PC-3 (cell line): ENCODE measurements at regions of chr12 and their contacts with region 1.

Region 1: DNA sequence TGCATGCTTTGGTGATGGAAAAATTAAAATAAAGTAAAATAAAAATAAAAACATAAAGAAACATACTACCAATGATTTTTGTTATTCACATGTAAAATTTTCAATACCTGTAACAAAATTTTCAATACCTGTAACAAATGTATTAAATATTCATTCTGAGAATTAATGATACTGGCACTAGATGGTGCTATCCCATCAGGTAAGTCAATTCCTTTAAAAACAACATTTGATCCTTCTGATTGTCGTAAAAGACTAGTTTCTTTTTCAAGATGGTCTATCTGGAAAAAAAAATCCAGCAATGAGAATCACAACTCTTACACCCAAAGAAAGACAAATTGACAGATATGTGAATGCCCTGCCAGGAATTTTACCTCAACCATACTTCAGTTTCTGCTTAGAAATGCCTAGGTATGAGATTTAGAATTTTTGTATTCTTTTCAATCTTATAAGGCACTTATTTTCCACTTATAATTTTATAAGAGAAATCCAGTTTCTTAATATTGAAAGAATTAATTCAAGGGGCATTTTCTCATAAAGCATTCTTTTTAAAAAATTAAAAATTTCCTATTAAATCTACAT is 30.7 kb downstream of the CEP290 start:
- DNase-seq: peak; percentile 76
- ATAC-seq: no peak
- H3K4me3 ChIP-seq: peak overlapping the region; percentile 61; the same call in 1 of the 2 replicates
- H3K27ac ChIP-seq: no peak overlapping the region
- H3K4me1 ChIP-seq: peaks cover 5% of the 10 kb centered on the region; the same call in 1 of the 2 replicates
- H3K27me3 ChIP-seq: no peaks in the 10 kb centered on the region
- CTCF ChIP-seq: peak; percentile 75

Region 2: DNA sequence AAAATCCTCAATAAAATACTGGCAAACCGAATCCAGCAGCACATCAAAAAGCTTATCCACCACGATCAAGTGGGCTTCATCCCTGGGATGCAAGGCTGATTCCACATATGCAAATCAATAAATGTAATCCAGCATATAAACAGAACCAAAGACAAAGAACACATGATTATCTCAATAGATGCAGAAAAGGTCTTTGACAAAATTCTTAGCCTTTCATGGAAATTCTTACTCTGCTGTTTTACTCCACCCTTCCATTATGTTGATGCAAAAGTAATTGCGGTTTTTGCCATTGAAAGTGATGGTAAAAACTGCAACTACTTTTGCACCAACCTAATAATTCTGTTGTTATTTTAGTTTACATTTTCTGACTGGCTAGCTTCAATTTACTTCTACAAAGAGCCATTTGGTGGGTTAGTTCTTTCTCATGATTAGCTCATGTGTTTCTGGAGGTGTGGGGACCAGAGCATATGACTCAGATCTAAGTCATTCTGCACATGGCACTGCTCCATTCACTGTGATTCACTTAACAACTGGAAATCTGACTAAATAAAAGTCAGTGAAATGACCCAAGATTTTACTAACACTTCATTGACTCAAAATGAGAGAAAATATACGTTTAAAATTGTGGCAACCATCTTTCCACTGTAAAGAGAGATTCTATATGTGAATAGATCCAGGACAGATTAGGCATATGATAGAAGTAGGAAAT is 130.9 kb after region 1 on chr12:
- CTCF ChIA-PET with region 1: no interaction called
- POLR2A ChIA-PET with region 1: no interaction called
- intact Hi-C with region 1: no loop called
- DNase-seq: peak; percentile 98
- ATAC-seq: peak; percentile 81
- H3K4me3 ChIP-seq: no peak overlapping the region
- H3K27ac ChIP-seq: peak overlapping the region; percentile 78
- H3K4me1 ChIP-seq: peaks cover 38% of the 10 kb centered on the region
- H3K27me3 ChIP-seq: no peaks in the 10 kb centered on the region
- CTCF ChIP-seq: no peak

Region 3: GRCh38 chr12:88453323-88453722 is 342.2 kb after region 1 on chr12:
- CTCF ChIA-PET with region 1: no interaction called
- POLR2A ChIA-PET with region 1: no interaction called
- intact Hi-C with region 1: no loop called
- DNase-seq: peak; percentile 37
- ATAC-seq: peak; percentile 73
- H3K4me3 ChIP-seq: no peak overlapping the region
- H3K27ac ChIP-seq: no peak overlapping the region
- H3K4me1 ChIP-seq: no peaks in the 10 kb centered on the region
- H3K27me3 ChIP-seq: no peaks in the 10 kb centered on the region
- CTCF ChIP-seq: no peak

Region 4: DNA sequence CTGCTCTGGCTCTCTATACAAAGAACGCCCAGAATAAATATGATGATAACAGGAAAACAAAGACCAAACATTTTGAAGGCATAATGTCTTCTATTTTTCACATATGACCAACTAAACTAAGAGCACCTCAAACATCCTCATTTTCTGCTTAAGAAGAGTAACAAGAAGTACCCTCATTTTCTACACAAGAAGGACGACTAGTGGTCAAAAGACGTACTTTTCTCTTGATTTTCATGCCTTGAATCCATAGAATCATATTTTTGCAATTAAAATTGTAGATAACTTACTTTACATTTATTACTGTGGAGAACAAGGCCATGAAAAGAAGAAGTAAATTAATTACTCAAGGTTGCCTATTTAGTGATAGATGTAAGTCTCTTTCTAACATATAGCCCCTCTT is 882.5 kb after region 1 on chr12:
- CTCF ChIA-PET with region 1: no interaction called
- POLR2A ChIA-PET with region 1: no interaction called
- intact Hi-C with region 1: loop called (anchors 2 kb)
- DNase-seq: peak; percentile 80
- ATAC-seq: peak; percentile 77
- H3K4me3 ChIP-seq: no peak overlapping the region
- H3K27ac ChIP-seq: no peak overlapping the region
- H3K4me1 ChIP-seq: peaks cover 11% of the 10 kb centered on the region
- H3K27me3 ChIP-seq: no peaks in the 10 kb centered on the region
- CTCF ChIP-seq: peak; percentile 87

Region 5: GRCh38 chr12:89019408-89020120 is 908.4 kb after region 1 on chr12:
- CTCF ChIA-PET with region 1: no interaction called
- POLR2A ChIA-PET with region 1: no interaction called
- intact Hi-C with region 1: loop called (anchors 5 kb)
- DNase-seq: peak; percentile 89
- ATAC-seq: peak; percentile 89
- H3K4me3 ChIP-seq: peak overlapping the region; percentile 64
- H3K27ac ChIP-seq: peak overlapping the region; percentile 12; the same call in 1 of the 2 replicates
- H3K4me1 ChIP-seq: peaks cover 17% of the 10 kb centered on the region
- H3K27me3 ChIP-seq: no peaks in the 10 kb centered on the region
- CTCF ChIP-seq: peak; percentile 99